Thyroid gland (tissue), 4 donors: ENCODE measurements at regions of chr3 and their contacts with region 1.

Region 1: DNA sequence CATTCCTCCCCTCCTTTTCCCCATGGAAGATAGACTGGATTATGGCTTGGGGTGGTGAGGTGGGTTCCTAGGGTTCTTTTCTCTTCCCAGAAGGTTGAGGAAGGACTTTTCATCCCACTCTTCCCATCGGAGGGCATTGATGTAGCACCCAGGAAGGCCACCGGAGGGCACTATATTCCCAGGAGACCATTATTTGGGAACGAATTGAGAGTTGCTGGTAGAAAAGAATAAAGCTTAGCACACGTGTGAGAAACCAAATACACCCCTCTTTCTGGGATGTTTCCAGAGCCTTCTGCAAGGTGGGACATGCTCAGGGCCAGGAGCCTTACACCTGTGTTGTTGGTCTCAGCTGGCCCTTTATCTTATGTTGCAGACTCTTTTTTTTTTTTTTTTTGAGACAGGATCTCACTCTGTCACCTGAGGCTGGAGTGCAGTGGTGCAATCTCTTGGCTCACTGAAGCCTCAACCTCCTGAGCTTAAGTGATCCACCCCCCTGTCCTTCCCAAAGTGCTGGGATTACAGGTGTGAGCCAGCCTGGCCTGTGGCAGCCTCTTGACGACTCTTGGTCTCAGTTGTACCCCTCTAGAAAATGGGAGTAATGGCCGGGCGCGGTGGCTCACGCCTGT is 6.3 kb upstream of the CDC25A start:
- DNase-seq: peak; percentile 78
- H3K4me3 ChIP-seq: no peak overlapping the region
- H3K27ac ChIP-seq: peak overlapping the region in 2 of 3 donors; percentile 23 to 30
- H3K4me1 ChIP-seq: no peaks in the 10 kb centered on the region
- H3K27me3 ChIP-seq: no peaks in the 10 kb centered on the region
- CTCF ChIP-seq: peak; percentile 74 to 91 (median 84)
- POLR2A ChIP-seq: no peak

Region 2: GRCh38 chr3:47877290-47877689 is 317.3 kb before region 1 on chr3:
- intact Hi-C with region 1: no loop called
- DNase-seq: no peak
- H3K4me3 ChIP-seq: no peak overlapping the region
- H3K27ac ChIP-seq: no peak overlapping the region
- H3K4me1 ChIP-seq: peaks cover 6 to 8% of the 10 kb centered on the region in 2 donors
- H3K27me3 ChIP-seq: no peaks in the 10 kb centered on the region
- CTCF ChIP-seq: no peak
- POLR2A ChIP-seq: no peak

Region 3: DNA sequence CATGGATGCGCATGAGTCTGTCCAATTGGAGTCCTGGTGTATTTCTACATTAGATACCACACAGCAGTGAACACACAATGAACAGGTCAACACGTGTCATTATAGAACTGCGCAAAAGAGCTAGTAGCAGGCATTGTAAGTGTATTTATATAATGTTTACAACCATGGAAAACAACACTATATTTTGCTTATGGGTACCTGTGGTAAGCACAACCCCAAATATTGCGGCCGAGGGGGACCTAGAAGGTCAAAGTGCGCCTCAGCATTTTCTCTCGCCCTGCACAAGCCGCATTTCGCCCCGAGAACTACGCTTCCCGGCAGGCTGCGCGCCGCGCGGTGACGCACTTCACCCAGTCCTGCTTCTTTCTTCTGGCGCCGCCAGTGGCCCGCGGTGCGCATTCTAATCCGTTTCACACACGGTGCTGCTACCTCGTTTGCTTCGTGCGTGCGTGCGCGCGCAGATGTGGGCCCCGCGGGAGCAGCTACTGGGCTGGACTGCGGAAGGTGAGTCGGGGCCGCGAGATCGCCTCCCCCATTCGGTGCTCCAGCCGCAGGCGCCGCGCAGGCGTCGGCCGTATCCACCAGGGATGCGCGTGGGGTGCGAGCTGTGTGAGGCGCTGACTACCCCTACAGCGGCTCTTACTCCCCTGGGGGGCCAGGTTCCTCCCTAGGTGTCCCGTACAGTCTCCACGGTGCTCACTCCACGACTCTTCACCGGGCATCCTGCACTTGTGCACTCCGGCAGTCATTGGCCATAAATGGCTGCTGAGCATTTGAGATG is 46.3 kb after region 1 on chr3 and contains the start of gene ZNF589:
- intact Hi-C with region 1: loop called (anchors 10 kb)
- DNase-seq: peak; percentile 95 to 96
- H3K4me3 ChIP-seq: peak within 1 kb of the TSS; percentile 70 to 90 (median 85)
- H3K27ac ChIP-seq: peak within 1 kb of the TSS; percentile 90 to 96 (median 92)
- H3K4me1 ChIP-seq: peaks cover 14 to 16% of the 10 kb centered on the region in 2 donors
- H3K27me3 ChIP-seq: no peaks in the 10 kb centered on the region
- CTCF ChIP-seq: peak in 2 of 6 experiments; percentile 12 to 25
- POLR2A ChIP-seq: peak in 1 of 2 donors; percentile 91
- total RNA-seq, gene ZNF589: 28.5 to 48.7 (median 37.8) TPM